B cell (primary cell): ENCODE measurements at regions of chr21 and their contacts with region 1.

Region 1: DNA sequence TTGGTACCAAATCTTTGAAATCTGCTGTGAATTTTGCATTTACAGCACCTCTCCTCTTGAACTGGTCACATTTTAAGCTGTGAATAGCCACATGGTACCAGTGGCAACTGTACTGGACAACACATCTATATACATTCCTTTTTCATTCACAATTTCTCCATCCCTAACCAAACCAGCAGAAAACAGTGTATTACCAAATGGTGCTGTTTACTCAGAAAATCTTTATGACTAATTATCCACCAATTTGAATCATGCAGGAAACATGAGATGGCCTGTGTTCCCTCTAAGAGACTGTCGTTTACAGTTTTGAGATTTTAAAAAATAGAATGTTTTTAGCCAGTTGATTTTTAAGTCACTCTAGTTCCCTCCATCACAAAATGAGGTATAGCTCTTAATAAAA is 17.6 kb upstream of the CCT8 start:
- DNase-seq: no peak
- ATAC-seq: no peak
- H3K4me3 ChIP-seq: no peak overlapping the region
- H3K4me3 Mint-ChIP-seq: no peak overlapping the region
- H3K27ac ChIP-seq: no peak overlapping the region
- H3K27ac Mint-ChIP-seq: no peak overlapping the region
- H3K4me1 ChIP-seq: no peaks in the 10 kb centered on the region
- H3K4me1 Mint-ChIP-seq: peaks cover 3% of the 10 kb centered on the region
- H3K27me3 ChIP-seq: no peaks in the 10 kb centered on the region
- H3K27me3 Mint-ChIP-seq: no peaks in the 10 kb centered on the region
- CTCF ChIP-seq: no peak

Region 2: DNA sequence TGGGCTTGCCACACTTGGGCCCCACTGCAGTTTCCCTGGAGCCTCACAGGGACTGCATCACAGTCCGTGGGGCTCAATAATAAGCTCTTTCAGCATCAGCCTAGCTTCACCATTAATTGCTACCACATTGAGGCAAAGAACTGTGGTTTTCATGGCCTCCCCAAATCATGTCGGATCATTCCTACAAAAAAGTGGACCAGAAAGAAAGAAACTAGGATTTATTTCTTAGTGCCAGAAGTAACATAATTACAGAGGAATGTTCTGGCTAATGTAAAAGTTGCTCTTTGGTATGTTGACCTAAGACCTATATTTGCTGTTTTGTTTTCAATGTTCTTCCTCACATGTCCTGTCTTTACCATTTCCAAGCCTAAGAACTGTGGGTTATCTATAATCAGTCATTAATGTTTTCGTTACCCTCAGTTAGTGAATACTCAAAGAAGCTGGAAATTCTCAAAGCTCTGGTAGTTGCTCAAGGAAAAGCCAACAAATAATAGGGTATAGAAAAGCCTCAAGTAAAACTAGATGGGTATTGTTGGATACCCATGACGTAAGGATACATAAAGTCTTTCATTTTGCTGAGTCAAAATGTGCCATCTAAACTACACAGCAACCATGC is 272.3 kb before region 1 on chr21:
- CTCF ChIA-PET with region 1: no interaction called
- POLR2A ChIA-PET with region 1: no interaction called
- intact Hi-C with region 1: no loop called
- DNase-seq: no peak
- ATAC-seq: no peak
- H3K4me3 ChIP-seq: no peak overlapping the region
- H3K4me3 Mint-ChIP-seq: no peak overlapping the region
- H3K27ac ChIP-seq: no peak overlapping the region
- H3K27ac Mint-ChIP-seq: no peak overlapping the region
- H3K4me1 ChIP-seq: no peaks in the 10 kb centered on the region
- H3K4me1 Mint-ChIP-seq: no peaks in the 10 kb centered on the region
- H3K27me3 ChIP-seq: no peaks in the 10 kb centered on the region
- H3K27me3 Mint-ChIP-seq: no peaks in the 10 kb centered on the region
- CTCF ChIP-seq: no peak

Region 3: GRCh38 chr21:29056005-29056404 is 35.0 kb before region 1 on chr21:
- CTCF ChIA-PET with region 1: no interaction called
- POLR2A ChIA-PET with region 1: no interaction called
- intact Hi-C with region 1: no loop called
- DNase-seq: no peak
- ATAC-seq: no peak
- H3K4me3 ChIP-seq: no peak overlapping the region
- H3K4me3 Mint-ChIP-seq: no peak overlapping the region
- H3K27ac ChIP-seq: peak overlapping the region in 1 of 2 donors; percentile 6
- H3K27ac Mint-ChIP-seq: no peak overlapping the region
- H3K4me1 ChIP-seq: peaks cover 6 to 10% of the 10 kb centered on the region in 2 donors
- H3K4me1 Mint-ChIP-seq: no peaks in the 10 kb centered on the region
- H3K27me3 ChIP-seq: no peaks in the 10 kb centered on the region
- H3K27me3 Mint-ChIP-seq: no peaks in the 10 kb centered on the region
- CTCF ChIP-seq: no peak

Region 4: GRCh38 chr21:29114765-29115164 is 23.7 kb after region 1 on chr21:
- CTCF ChIA-PET with region 1: interaction called, 10 read pairs
- POLR2A ChIA-PET with region 1: no interaction called
- intact Hi-C with region 1: no loop called
- DNase-seq: no peak
- ATAC-seq: no peak
- H3K4me3 ChIP-seq: no peak overlapping the region
- H3K4me3 Mint-ChIP-seq: no peak overlapping the region
- H3K27ac ChIP-seq: no peak overlapping the region
- H3K27ac Mint-ChIP-seq: no peak overlapping the region
- H3K4me1 ChIP-seq: peaks cover 0 to 6% of the 10 kb centered on the region in 2 donors
- H3K4me1 Mint-ChIP-seq: peaks cover 14% of the 10 kb centered on the region
- H3K27me3 ChIP-seq: no peaks in the 10 kb centered on the region
- H3K27me3 Mint-ChIP-seq: no peaks in the 10 kb centered on the region
- CTCF ChIP-seq: no peak

Region 5: DNA sequence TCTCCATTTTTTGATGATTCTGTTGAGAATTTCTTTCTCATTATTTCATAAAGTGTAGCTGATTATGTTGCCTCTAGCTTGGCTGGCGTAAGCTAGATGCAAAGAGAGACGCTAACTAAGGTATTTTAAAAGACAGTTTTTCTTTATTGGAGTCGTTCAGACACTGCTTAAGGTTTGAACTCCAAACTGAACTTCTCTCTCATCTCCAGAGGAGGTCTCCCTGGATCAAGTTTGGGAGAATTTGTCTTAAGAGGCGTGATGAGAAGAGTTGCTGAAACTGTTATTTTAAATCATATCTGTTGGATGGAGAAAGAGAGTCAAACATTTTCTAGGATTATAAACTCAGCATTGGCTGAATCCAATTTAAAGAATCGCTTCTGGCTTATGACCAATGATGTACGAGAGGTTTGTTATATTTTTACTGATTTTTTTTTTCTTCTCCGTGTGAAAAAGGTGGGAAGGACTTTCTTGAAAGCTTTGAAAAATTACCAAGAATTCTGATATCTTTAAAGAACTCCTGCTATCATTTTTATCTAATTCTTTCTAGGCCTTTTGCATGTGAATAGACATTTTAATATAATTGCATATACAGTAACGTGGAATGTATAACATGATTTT is 73.4 kb after region 1 on chr21:
- CTCF ChIA-PET with region 1: interaction called, 6 read pairs
- POLR2A ChIA-PET with region 1: no interaction called
- intact Hi-C with region 1: loop called (anchors 2 kb)
- DNase-seq: peak; percentile 39
- ATAC-seq: no peak
- H3K4me3 ChIP-seq: no peak overlapping the region
- H3K4me3 Mint-ChIP-seq: no peak overlapping the region
- H3K27ac ChIP-seq: no peak overlapping the region
- H3K27ac Mint-ChIP-seq: no peak overlapping the region
- H3K4me1 ChIP-seq: no peaks in the 10 kb centered on the region
- H3K4me1 Mint-ChIP-seq: no peaks in the 10 kb centered on the region
- H3K27me3 ChIP-seq: no peaks in the 10 kb centered on the region
- H3K27me3 Mint-ChIP-seq: no peaks in the 10 kb centered on the region
- CTCF ChIP-seq: peak; percentile 37

Region 6: GRCh38 chr21:29293495-29293894 is 202.5 kb after region 1 on chr21:
- CTCF ChIA-PET with region 1: interaction called, 6 read pairs
- POLR2A ChIA-PET with region 1: no interaction called
- intact Hi-C with region 1: loop called (anchors 5 kb)
- DNase-seq: peak; percentile 91
- ATAC-seq: peak; percentile 95
- H3K4me3 ChIP-seq: no peak overlapping the region
- H3K4me3 Mint-ChIP-seq: peak overlapping the region; percentile 33
- H3K27ac ChIP-seq: peak overlapping the region; percentile 72 to 77
- H3K27ac Mint-ChIP-seq: peak overlapping the region; percentile 93
- H3K4me1 ChIP-seq: peaks cover 29 to 30% of the 10 kb centered on the region in 2 donors
- H3K4me1 Mint-ChIP-seq: peaks cover 43% of the 10 kb centered on the region
- H3K27me3 ChIP-seq: no peaks in the 10 kb centered on the region
- H3K27me3 Mint-ChIP-seq: no peaks in the 10 kb centered on the region
- CTCF ChIP-seq: no peak

Region 7: GRCh38 chr21:29477941-29478340 is 386.9 kb after region 1 on chr21:
- CTCF ChIA-PET with region 1: interaction called, 3 read pairs
- POLR2A ChIA-PET with region 1: no interaction called
- intact Hi-C with region 1: loop called (anchors 1 kb)
- DNase-seq: no peak
- ATAC-seq: no peak
- H3K4me3 ChIP-seq: no peak overlapping the region
- H3K4me3 Mint-ChIP-seq: no peak overlapping the region
- H3K27ac ChIP-seq: no peak overlapping the region
- H3K27ac Mint-ChIP-seq: no peak overlapping the region
- H3K4me1 ChIP-seq: peaks cover 0 to 5% of the 10 kb centered on the region in 2 donors
- H3K4me1 Mint-ChIP-seq: peaks cover 8% of the 10 kb centered on the region
- H3K27me3 ChIP-seq: no peaks in the 10 kb centered on the region
- H3K27me3 Mint-ChIP-seq: no peaks in the 10 kb centered on the region
- CTCF ChIP-seq: no peak

Region 8: GRCh38 chr21:29849735-29850176 is 758.7 kb after region 1 on chr21:
- CTCF ChIA-PET with region 1: interaction called, 21 read pairs
- POLR2A ChIA-PET with region 1: no interaction called
- intact Hi-C with region 1: no loop called
- DNase-seq: peak; percentile 51
- ATAC-seq: peak; percentile 86
- H3K4me3 ChIP-seq: no peak overlapping the region
- H3K4me3 Mint-ChIP-seq: no peak overlapping the region
- H3K27ac ChIP-seq: no peak overlapping the region
- H3K27ac Mint-ChIP-seq: no peak overlapping the region
- H3K4me1 ChIP-seq: no peaks in the 10 kb centered on the region
- H3K4me1 Mint-ChIP-seq: no peaks in the 10 kb centered on the region
- H3K27me3 ChIP-seq: peaks cover 0 to 3% (median 0%) of the 10 kb centered on the region in 4 experiments
- H3K27me3 Mint-ChIP-seq: peaks cover 16% of the 10 kb centered on the region
- CTCF ChIP-seq: peak; percentile 79